Activated T-helper 2 cell treated with anti-CD3 and anti-CD28 coated beads, Interferon-gamma antibody, Interleukin-2, Interleukin-4, amounts not matched to agents 10 μg/mL and 5 μg/mL and 100 μg/mL, durations not matched to agents 14 hours and 24 hours and 36 hours (primary cell): ENCODE measurements at regions of chr15 and their contacts with region 1.

Region 1: DNA sequence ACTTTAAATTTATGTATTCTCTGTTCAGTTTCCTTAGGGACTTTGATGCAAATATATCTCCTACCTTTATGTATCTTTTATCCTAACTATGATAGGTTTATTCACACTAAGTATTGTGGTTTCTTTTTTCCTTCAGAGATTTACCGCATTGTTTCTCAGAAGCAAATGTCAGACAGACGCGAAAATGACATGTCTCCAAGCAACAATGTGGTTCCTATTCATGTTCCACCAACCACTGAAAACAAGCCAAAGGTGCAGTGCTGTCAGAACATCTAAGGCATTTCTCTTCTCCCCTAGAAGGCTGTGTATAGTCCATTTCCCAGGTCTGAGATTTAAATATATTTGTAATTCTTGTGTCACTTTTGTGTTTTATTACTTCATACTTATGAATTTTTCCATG is 18.3 kb downstream of the RAB11A start:
- DNase-seq: peak; percentile 46
- H3K4me3 Mint-ChIP-seq: no peak overlapping the region
- H3K27ac Mint-ChIP-seq: peak overlapping the region; percentile 68
- H3K4me1 Mint-ChIP-seq: peaks cover 71% of the 10 kb centered on the region
- H3K27me3 Mint-ChIP-seq: no peaks in the 10 kb centered on the region

Region 2: GRCh38 chr15:65630760-65631159 is 256.8 kb before region 1 on chr15:
- intact Hi-C with region 1: no loop called
- DNase-seq: no peak
- H3K4me3 Mint-ChIP-seq: no peak overlapping the region
- H3K27ac Mint-ChIP-seq: no peak overlapping the region
- H3K4me1 Mint-ChIP-seq: peaks cover 8% of the 10 kb centered on the region
- H3K27me3 Mint-ChIP-seq: no peaks in the 10 kb centered on the region

Region 3: GRCh38 chr15:65869127-65869953 is 18.2 kb before region 1 on chr15 and contains the start of gene RAB11A:
- intact Hi-C with region 1: loop called (anchors 1 kb)
- DNase-seq: peak; percentile 94
- H3K4me3 Mint-ChIP-seq: peak within 1 kb of the TSS; percentile 89
- H3K27ac Mint-ChIP-seq: peak within 1 kb of the TSS; percentile 84
- H3K4me1 Mint-ChIP-seq: peaks cover 19% of the 10 kb centered on the region
- H3K27me3 Mint-ChIP-seq: no peaks in the 10 kb centered on the region
- total RNA-seq, gene RAB11A: 153 and 155 TPM in 2 replicates

Region 4: GRCh38 chr15:65916664-65917406 is 29.3 kb after region 1 on chr15:
- intact Hi-C with region 1: loop called (anchors 1 kb)
- DNase-seq: peak; percentile 14
- H3K4me3 Mint-ChIP-seq: no peak overlapping the region
- H3K27ac Mint-ChIP-seq: peak overlapping the region; percentile 42
- H3K4me1 Mint-ChIP-seq: peaks cover 20% of the 10 kb centered on the region
- H3K27me3 Mint-ChIP-seq: no peaks in the 10 kb centered on the region

Region 5: GRCh38 chr15:66004618-66005262 is 117.2 kb after region 1 on chr15:
- intact Hi-C with region 1: no loop called
- DNase-seq: no peak
- H3K4me3 Mint-ChIP-seq: no peak overlapping the region
- H3K27ac Mint-ChIP-seq: no peak overlapping the region
- H3K4me1 Mint-ChIP-seq: no peaks in the 10 kb centered on the region
- H3K27me3 Mint-ChIP-seq: peaks cover 17% of the 10 kb centered on the region